Panc1 (cell line): ENCODE measurements at regions of chr16 and their contacts with region 1.

Region 1: DNA sequence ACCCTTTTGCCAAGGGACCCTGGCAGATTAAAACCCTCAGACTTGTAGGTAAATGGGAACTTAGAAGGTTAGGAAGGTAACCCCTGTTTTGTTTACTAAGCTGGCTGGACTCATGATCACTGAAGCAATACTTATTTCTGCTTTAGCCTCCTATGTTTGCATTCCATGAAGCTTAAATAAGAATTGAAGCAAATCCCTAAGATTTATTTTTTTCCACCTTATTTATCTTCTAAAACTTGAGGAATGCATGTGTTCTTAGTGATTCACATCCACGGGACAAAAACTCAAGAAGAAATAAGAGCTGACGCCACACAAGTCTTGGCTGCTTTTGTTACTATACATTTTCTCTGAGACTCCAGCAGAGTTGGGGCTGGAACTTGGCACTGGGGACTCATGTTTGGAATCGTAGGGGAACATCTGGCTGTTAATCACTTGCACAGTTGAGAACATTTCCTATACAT is 35.5 kb downstream of the CLUAP1 start:
- DNase-seq: no peak
- ATAC-seq: no peak
- H3K4me3 ChIP-seq: no peak overlapping the region
- H3K27ac ChIP-seq: no peak overlapping the region
- H3K4me1 ChIP-seq: no peaks in the 10 kb centered on the region
- H3K27me3 ChIP-seq: no peaks in the 10 kb centered on the region
- CTCF ChIP-seq: no peak

Region 2: GRCh38 chr16:3553138-3553923 is 17.0 kb after region 1 on chr16:
- CTCF ChIA-PET with region 1: interaction called, 11 read pairs
- POLR2A ChIA-PET with region 1: no interaction called
- in situ Hi-C with region 1: no loop called
- intact Hi-C with region 1: no loop called
- DNase-seq: no peak
- ATAC-seq: no peak
- H3K4me3 ChIP-seq: no peak overlapping the region
- H3K27ac ChIP-seq: no peak overlapping the region
- H3K4me1 ChIP-seq: no peaks in the 10 kb centered on the region
- H3K27me3 ChIP-seq: no peaks in the 10 kb centered on the region
- CTCF ChIP-seq: no peak

Region 3: DNA sequence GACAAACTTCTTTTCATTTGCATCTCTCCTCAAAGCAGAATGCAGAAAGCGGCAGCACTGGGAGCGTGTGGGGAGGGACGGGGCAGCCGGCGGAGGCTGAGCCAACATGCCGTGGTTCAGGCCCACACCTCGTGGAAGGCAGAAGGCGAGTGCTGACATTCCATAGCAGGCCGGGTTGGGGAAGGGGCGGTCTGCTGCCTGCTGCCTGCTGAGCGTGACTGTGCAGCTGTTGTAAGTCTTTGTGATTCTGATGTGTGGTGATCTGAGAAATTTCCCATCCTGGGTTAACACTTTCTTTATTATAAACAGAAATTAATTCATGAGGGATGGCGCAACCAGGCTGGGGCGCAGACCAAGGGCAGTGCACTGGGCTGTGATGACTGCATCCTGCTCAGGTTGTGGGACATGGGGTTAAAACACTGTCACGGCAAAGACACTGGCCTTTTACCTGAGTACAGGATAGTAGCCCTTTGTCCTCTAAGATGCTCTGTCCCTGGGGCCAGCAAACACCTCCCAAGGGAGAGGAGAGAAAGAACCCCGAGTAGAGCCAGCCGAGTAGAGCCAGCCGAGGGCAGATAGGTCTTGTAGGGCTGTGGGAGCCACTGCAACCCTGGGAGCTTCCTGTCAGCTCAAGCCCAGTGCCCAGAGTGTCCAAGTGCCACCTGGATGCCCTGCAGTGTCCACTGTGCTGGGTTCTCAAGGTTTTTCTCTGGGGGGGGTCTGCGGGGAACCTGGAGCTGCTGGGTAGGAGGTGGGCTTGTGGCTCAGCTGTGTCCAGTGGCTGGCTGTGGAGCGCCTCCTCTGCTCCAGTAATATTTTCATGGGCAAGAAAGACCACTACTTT is 109.4 kb after region 1 on chr16:
- CTCF ChIA-PET with region 1: no interaction called
- POLR2A ChIA-PET with region 1: no interaction called
- in situ Hi-C with region 1: no loop called
- intact Hi-C with region 1: no loop called
- DNase-seq: no peak
- ATAC-seq: peak; percentile 72
- H3K4me3 ChIP-seq: no peak overlapping the region
- H3K27ac ChIP-seq: peak overlapping the region; percentile 62
- H3K4me1 ChIP-seq: peaks cover 24% of the 10 kb centered on the region
- H3K27me3 ChIP-seq: no peaks in the 10 kb centered on the region
- CTCF ChIP-seq: no peak

Region 4: DNA sequence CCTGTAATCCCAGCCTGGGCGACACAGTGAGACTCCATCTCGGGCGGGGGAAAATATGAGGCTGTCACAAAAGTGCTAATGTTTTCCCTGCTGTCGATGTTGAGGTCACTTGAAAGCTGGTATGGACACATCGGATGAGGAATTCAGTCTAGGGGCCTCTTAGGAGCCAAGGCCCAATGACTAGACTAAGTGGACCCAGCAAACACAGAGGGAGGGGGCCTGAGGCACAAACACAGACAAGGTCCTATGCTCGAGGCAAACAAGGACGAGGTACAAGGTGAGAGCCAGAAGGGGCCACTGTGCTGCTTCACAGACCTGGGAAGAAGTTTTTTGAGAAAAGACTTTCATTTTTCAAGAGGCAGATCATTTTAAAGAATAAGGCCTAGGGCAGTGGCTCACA is 165.8 kb after region 1 on chr16:
- CTCF ChIA-PET with region 1: no interaction called
- POLR2A ChIA-PET with region 1: interaction called, 12 read pairs
- in situ Hi-C with region 1: no loop called
- intact Hi-C with region 1: no loop called
- DNase-seq: no peak
- ATAC-seq: no peak
- H3K4me3 ChIP-seq: no peak overlapping the region
- H3K27ac ChIP-seq: no peak overlapping the region
- H3K4me1 ChIP-seq: no peaks in the 10 kb centered on the region
- H3K27me3 ChIP-seq: no peaks in the 10 kb centered on the region
- CTCF ChIP-seq: no peak